ENCODE measurements at regions of chr18 and their contacts with region 1.

Region 1: GRCh38 chr18:48445540-48445939 is 36.4 kb upstream of the ZBTB7C start:
- DNase-seq: peak; percentile 64
- H3K4me3 ChIP-seq: no peak overlapping the region
- H3K27ac ChIP-seq: no peak overlapping the region
- H3K4me1 ChIP-seq: peaks cover 7% of the 10 kb centered on the region
- H3K27me3 ChIP-seq: peaks cover 23 to 34% of the 10 kb centered on the region in 2 experiments
- CTCF ChIP-seq: peak; percentile 89 to 95
- POLR2A ChIP-seq: no peak

Region 2: GRCh38 chr18:48022531-48023329 is 422.8 kb before region 1 on chr18:
- CTCF ChIA-PET with region 1: interaction called, 4 read pairs
- POLR2A ChIA-PET with region 1: no interaction called
- dilution Hi-C with region 1: no loop called
- intact Hi-C with region 1: loop called (anchors 1 kb)
- DNase-seq: peak; percentile 64
- H3K4me3 ChIP-seq: no peak overlapping the region
- H3K27ac ChIP-seq: no peak overlapping the region
- H3K4me1 ChIP-seq: peaks cover 10% of the 10 kb centered on the region
- H3K27me3 ChIP-seq: peaks cover 2 to 9% of the 10 kb centered on the region in 2 experiments
- CTCF ChIP-seq: peak; percentile 47 to 57
- POLR2A ChIP-seq: no peak

Region 3: DNA sequence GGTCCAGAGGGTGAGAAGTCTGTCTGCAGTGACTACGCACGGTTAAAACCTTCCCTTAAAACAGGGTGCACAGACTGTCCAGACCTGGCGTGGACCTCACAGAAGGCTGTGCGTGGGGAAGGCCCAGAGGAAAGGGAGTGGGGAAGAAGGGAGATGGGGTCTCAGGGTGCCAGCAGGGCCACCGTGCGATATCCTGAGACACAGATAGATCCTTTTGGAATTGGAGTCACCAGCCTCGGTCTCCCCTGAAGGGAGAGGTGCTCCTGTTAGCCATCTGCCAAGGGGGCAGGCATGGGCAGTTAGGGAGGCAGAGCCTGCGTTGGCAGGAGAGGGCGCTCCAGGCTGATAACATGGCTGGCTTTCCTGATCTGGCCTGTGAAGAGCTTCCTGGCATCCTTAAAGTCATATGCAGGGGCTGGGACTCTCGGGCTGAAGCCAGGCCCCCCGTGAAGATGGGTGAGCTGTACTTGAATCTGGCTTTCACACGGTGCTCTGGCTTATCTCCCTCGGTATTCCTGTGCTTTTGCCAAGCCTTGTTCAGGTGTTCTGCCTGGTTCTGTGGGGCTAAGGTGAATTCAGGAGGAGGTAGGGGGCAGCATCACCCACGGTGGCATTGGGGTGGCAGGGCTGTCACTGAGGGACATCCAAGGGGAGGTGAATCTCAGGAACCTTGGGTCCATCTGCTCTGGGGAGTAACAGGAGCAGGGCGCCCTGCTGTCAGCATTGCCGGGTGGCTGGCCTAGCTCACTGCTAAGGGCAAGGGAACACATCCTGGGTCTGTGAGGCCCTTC is 407.9 kb before region 1 on chr18:
- CTCF ChIA-PET with region 1: interaction called, 31 read pairs
- POLR2A ChIA-PET with region 1: no interaction called
- dilution Hi-C with region 1: no loop called
- intact Hi-C with region 1: loop called (anchors 1 kb)
- DNase-seq: peak; percentile 9
- H3K4me3 ChIP-seq: no peak overlapping the region
- H3K27ac ChIP-seq: no peak overlapping the region
- H3K4me1 ChIP-seq: no peaks in the 10 kb centered on the region
- H3K27me3 ChIP-seq: no peaks in the 10 kb centered on the region
- CTCF ChIP-seq: peak; percentile 10 to 29
- POLR2A ChIP-seq: no peak

Region 4: DNA sequence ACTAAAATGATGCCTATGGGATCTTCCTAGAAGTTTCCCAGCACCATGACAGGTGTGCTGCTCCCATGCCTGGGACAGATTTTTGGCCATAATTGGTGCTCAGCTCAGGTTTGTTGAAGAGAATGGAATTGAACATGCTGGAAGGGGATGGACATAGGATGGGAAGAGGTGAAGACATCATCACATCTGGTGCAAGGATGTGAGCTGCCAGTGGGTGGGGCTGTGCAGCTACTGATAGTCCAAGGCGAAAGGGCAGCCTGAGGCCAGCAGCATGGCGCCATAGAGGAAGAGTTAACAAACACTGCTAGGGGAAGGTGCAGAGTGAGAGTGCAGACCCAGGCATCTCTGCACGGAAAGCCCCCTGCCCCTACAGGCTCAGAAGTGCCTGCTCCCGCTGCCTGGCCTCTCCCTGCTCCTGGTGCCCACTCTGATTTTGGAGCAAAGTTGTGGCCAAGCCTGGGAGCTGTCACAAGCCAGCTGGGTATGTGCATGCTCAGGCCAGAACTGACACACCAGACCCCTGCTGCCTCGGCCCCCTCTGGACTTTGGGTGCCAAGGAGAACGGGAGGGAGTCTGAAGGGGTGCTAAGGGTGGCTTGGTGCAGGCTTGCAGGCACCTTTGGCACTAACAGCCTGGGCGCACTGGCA is 214.9 kb before region 1 on chr18:
- CTCF ChIA-PET with region 1: interaction called, 18 read pairs
- POLR2A ChIA-PET with region 1: no interaction called
- dilution Hi-C with region 1: no loop called
- intact Hi-C with region 1: loop called (anchors 1 kb)
- DNase-seq: peak; percentile 7
- H3K4me3 ChIP-seq: no peak overlapping the region
- H3K27ac ChIP-seq: no peak overlapping the region
- H3K4me1 ChIP-seq: no peaks in the 10 kb centered on the region
- H3K27me3 ChIP-seq: peaks cover 8 to 16% of the 10 kb centered on the region in 2 experiments
- CTCF ChIP-seq: peak in 1 of 2 donors; percentile 29
- POLR2A ChIP-seq: no peak

Region 5: GRCh38 chr18:48430150-48430549 is 15.4 kb before region 1 on chr18:
- CTCF ChIA-PET with region 1: interaction called, 10 read pairs
- POLR2A ChIA-PET with region 1: no interaction called
- dilution Hi-C with region 1: no loop called
- intact Hi-C with region 1: no loop called
- DNase-seq: no peak
- H3K4me3 ChIP-seq: no peak overlapping the region
- H3K27ac ChIP-seq: no peak overlapping the region
- H3K4me1 ChIP-seq: no peaks in the 10 kb centered on the region
- H3K27me3 ChIP-seq: peaks cover 9 to 12% of the 10 kb centered on the region in 2 experiments
- CTCF ChIP-seq: no peak
- POLR2A ChIP-seq: no peak

Region 6: DNA sequence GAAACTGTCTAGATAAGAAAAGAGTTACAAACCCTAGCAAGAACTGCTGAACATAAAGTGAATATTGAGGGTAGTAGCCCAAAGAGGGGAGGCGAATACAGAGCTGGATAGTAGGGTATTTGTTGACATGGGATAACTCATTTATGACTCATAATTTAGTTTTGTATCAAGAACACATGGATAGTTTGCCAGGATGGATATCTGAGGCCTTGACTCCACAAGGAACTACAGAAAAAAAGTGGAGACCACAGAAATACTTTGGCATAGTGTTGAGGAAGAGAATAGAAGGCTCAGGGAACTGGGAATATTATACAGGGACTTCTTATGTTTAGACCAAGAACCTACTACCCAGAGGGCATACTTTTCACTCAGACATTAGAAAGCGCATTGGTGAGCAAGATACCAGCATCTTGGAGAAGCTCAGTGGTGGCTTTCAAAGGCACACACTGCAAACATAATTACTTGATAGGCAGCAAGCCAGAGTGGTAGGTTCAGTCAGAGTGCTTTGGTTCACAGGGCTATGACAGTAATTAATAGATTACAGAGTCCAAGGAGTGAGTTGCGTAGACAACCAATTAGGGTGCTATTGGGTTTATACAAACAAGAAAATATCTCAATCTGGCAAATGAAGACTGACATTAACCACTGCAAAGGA is 15.5 kb after region 1 on chr18:
- CTCF ChIA-PET with region 1: interaction called, 24 read pairs
- POLR2A ChIA-PET with region 1: no interaction called
- dilution Hi-C with region 1: no loop called
- intact Hi-C with region 1: no loop called
- DNase-seq: no peak
- H3K4me3 ChIP-seq: no peak overlapping the region
- H3K27ac ChIP-seq: no peak overlapping the region
- H3K4me1 ChIP-seq: no peaks in the 10 kb centered on the region
- H3K27me3 ChIP-seq: peaks cover 14 to 15% of the 10 kb centered on the region in 2 experiments
- CTCF ChIP-seq: no peak
- POLR2A ChIP-seq: no peak

Region 7: DNA sequence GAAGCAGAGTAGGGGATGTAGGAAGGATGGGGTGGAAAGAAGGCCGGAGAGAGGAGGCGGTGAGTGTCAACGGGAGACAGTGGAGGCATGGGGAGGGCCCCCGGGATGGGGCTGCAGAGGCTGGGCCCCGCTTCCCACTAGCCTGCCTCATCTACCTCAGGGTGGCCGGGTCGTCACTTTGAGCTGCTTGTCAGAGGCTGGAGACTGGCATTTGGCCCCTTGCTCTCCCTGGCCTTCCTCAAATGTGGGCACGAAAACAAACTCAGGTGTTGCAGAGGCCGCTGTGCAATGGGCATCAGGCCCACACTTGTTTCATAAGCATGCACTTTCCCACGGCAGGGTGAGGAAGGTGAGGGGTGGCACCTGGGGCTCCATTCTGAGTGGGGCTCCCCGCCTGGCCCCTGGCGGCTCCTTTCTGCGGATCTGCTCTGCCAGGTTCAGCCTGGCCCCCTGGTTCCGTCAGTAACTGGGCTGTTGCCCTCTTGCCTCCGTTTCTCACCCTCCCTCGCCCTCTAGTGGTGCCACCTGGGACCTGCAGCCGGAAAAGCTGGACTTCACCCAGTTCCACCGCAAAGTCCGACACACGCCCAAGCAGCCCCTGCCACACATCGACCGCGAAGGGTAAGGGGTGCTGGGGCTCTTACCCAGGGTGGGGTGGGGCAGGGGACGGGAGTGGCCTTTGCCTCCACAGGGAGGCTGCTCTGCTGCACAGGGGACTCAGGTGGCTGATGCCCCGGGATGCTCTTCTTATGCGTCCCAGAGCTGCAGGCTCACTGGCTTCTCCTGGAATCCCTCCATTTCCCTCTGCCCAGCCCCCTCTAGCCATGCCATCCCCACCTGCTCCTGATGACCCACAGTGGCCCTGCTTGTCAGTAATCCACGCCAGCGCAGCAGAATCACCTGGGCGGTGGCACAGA is 218.6 kb after region 1 on chr18:
- CTCF ChIA-PET with region 1: interaction called, 3 read pairs
- POLR2A ChIA-PET with region 1: no interaction called
- dilution Hi-C with region 1: no loop called
- intact Hi-C with region 1: loop called (anchors 1 kb)
- DNase-seq: peak; percentile 57
- H3K4me3 ChIP-seq: no peak overlapping the region
- H3K27ac ChIP-seq: no peak overlapping the region
- H3K4me1 ChIP-seq: no peaks in the 10 kb centered on the region
- H3K27me3 ChIP-seq: no peaks in the 10 kb centered on the region
- CTCF ChIP-seq: peak; percentile 84 to 96
- POLR2A ChIP-seq: no peak